GM13976 (cell line): ENCODE measurements at regions of chr5 and their contacts with region 1.

Region 1: GRCh38 chr5:60287174-60287771 is 393.7 kb upstream of the PDE4D start:
- DNase-seq: no peak
- CTCF ChIP-seq: peak; percentile 43

Region 2: GRCh38 chr5:60668686-60669304 is 381.5 kb after region 1 on chr5:
- in situ Hi-C with region 1: loop called (anchors 25 kb)
- DNase-seq: peak; percentile 37
- CTCF ChIP-seq: peak; percentile 13

Region 3: DNA sequence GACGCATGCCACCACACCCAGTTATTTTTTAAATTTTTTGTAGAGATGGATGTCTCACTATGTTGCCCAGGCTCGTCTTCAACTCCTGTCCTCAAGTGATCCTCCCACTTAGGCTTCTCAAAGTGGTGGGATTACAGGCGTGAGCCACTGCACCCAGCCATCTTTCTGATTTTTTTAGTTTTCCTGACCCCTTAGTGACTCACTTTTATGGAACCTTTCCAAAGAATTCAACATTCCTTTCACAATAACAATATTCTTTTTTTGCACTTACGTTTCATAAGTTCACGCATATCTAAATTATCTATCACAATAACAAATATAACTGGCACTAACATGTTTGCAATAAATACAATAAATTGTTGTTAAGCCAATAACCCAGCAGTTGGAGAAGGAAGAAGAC is 548.3 kb after region 1 on chr5:
- in situ Hi-C with region 1: no loop called
- DNase-seq: no peak
- CTCF ChIP-seq: no peak